PC-3 (cell line): ENCODE measurements at regions of chr11 and their contacts with region 1.

Region 1: DNA sequence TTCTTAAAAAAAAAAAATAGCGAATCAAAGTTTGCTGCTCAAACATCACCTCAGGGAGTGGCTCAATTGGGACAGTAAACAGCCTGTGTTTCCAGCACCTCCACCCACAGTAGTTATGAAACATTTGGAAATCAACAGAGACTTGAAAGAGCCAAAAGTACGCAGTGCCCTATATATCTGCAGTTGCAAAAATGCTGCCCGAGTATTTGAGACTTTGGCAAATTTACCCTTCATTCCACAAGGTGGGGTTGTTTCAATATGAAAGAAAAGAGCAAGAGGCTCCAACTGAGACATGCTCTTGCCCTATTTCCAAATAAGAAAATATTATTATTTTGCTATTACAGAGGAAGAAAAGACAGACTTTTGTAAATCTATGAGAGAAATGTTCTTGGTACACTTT is 851.1 kb upstream of the RAG2 start:
- DNase-seq: peak; percentile 81
- ATAC-seq: peak; percentile 90
- H3K4me3 ChIP-seq: no peak overlapping the region
- H3K27ac ChIP-seq: no peak overlapping the region
- H3K4me1 ChIP-seq: peaks cover 15% of the 10 kb centered on the region
- H3K27me3 ChIP-seq: no peaks in the 10 kb centered on the region
- CTCF ChIP-seq: peak; percentile 76

Region 2: DNA sequence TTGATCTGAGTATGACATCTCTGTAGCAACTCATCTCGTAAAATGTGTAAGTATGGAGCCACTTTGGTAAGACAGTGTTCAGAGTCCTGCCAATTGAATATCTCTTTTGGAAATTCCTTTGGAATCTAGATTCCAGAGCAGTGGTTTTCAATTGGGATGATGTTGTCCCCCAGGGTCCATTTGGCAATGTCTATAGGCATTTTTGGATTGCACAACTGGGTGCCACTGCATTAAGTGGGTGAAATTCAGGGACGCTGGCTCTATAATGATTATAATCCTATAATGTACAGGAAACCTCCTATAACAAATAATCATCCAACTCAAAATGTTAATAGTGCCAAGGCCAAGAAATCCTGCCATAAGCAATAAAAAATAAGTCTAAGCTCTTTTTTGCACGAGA is 446.3 kb before region 1 on chr11:
- CTCF ChIA-PET with region 1: no interaction called
- POLR2A ChIA-PET with region 1: no interaction called
- intact Hi-C with region 1: loop called (anchors 5 kb)
- DNase-seq: no peak
- ATAC-seq: no peak
- H3K4me3 ChIP-seq: no peak overlapping the region
- H3K27ac ChIP-seq: no peak overlapping the region
- H3K4me1 ChIP-seq: no peaks in the 10 kb centered on the region
- H3K27me3 ChIP-seq: no peaks in the 10 kb centered on the region
- CTCF ChIP-seq: no peak

Region 3: DNA sequence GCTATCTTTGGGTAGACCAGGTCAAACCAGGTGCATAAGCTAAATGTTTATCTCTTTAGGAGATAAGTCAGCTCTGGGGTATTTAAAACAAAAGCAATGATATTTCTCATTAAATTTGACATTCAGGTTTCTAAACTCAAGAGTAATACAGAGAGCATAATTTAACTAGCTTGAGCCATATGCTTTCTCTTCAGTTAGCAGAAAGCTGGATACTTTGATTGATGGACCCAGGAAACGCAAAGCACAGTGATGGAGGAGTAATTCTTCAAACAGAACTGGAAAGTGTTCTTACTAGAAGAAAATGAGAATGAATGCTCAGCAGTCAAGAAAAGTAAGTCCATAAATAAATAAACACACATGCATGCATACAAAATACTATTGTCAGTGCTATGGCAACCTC is 34.6 kb after region 1 on chr11:
- CTCF ChIA-PET with region 1: no interaction called
- POLR2A ChIA-PET with region 1: no interaction called
- intact Hi-C with region 1: no loop called
- DNase-seq: no peak
- ATAC-seq: no peak
- H3K4me3 ChIP-seq: no peak overlapping the region
- H3K27ac ChIP-seq: peak overlapping the region; percentile 47
- H3K4me1 ChIP-seq: peaks cover 11% of the 10 kb centered on the region
- H3K27me3 ChIP-seq: no peaks in the 10 kb centered on the region
- CTCF ChIP-seq: no peak

Region 4: GRCh38 chr11:37504060-37504611 is 55.0 kb after region 1 on chr11:
- CTCF ChIA-PET with region 1: no interaction called
- POLR2A ChIA-PET with region 1: no interaction called
- intact Hi-C with region 1: loop called (anchors 10 kb)
- DNase-seq: peak; percentile 92
- ATAC-seq: peak; percentile 78
- H3K4me3 ChIP-seq: peak overlapping the region; percentile 57
- H3K27ac ChIP-seq: peak overlapping the region; percentile 100
- H3K4me1 ChIP-seq: peaks cover 65% of the 10 kb centered on the region
- H3K27me3 ChIP-seq: no peaks in the 10 kb centered on the region
- CTCF ChIP-seq: no peak

Region 5: GRCh38 chr11:37657645-37658044 is 208.5 kb after region 1 on chr11:
- CTCF ChIA-PET with region 1: no interaction called
- POLR2A ChIA-PET with region 1: no interaction called
- intact Hi-C with region 1: loop called (anchors 2 kb)
- DNase-seq: peak; percentile 57
- ATAC-seq: 0 out of 2 replicates have a peak, but pooled peaks have one; percentile 24
- H3K4me3 ChIP-seq: no peak overlapping the region
- H3K27ac ChIP-seq: no peak overlapping the region
- H3K4me1 ChIP-seq: no peaks in the 10 kb centered on the region
- H3K27me3 ChIP-seq: no peaks in the 10 kb centered on the region
- CTCF ChIP-seq: peak; percentile 65

Region 6: GRCh38 chr11:37699644-37700043 is 250.5 kb after region 1 on chr11:
- CTCF ChIA-PET with region 1: no interaction called
- POLR2A ChIA-PET with region 1: no interaction called
- intact Hi-C with region 1: no loop called
- DNase-seq: no peak
- ATAC-seq: no peak
- H3K4me3 ChIP-seq: no peak overlapping the region
- H3K27ac ChIP-seq: no peak overlapping the region
- H3K4me1 ChIP-seq: no peaks in the 10 kb centered on the region
- H3K27me3 ChIP-seq: no peaks in the 10 kb centered on the region
- CTCF ChIP-seq: no peak

Region 7: GRCh38 chr11:39374963-39375698 is 1926.0 kb after region 1 on chr11:
- CTCF ChIA-PET with region 1: no interaction called
- POLR2A ChIA-PET with region 1: no interaction called
- intact Hi-C with region 1: loop called (anchors 10 kb)
- DNase-seq: peak; percentile 67
- ATAC-seq: peak; percentile 43
- H3K4me3 ChIP-seq: no peak overlapping the region
- H3K27ac ChIP-seq: no peak overlapping the region
- H3K4me1 ChIP-seq: no peaks in the 10 kb centered on the region
- H3K27me3 ChIP-seq: no peaks in the 10 kb centered on the region
- CTCF ChIP-seq: peak; percentile 73